Naive thymus-derived CD4-positive, alpha-beta T cell (primary cell): ENCODE measurements at regions of chr2 and their contacts with region 1.

Region 1: GRCh38 chr2:169109502-169110409 is 40.4 kb downstream of the DHRS9 start:
- DNase-seq: peak; percentile 45 to 77 (median 60)
- ATAC-seq: peak; percentile 62
- H3K4me3 ChIP-seq: no peak overlapping the region
- H3K4me3 Mint-ChIP-seq: no peak overlapping the region
- H3K27ac ChIP-seq: no peak overlapping the region
- H3K27ac Mint-ChIP-seq: peak overlapping the region in 1 of 9 donors; percentile 34
- H3K4me1 ChIP-seq: peaks cover 45 to 48% of the 10 kb centered on the region in 2 donors
- H3K4me1 Mint-ChIP-seq: peaks cover 36 to 56% (median 46%) of the 10 kb centered on the region in 7 donors
- H3K27me3 ChIP-seq: no peaks in the 10 kb centered on the region
- H3K27me3 Mint-ChIP-seq: peaks cover 0 to 6% (median 0%) of the 10 kb centered on the region in 5 donors

Region 2: GRCh38 chr2:169014780-169015179 is 95.0 kb before region 1 on chr2:
- CTCF ChIA-PET with region 1: no interaction called
- POLR2A ChIA-PET with region 1: no interaction called
- intact Hi-C with region 1: loop called in 1 of 2 experiments (anchors 5 kb)
- DNase-seq: no peak
- ATAC-seq: no peak
- H3K4me3 ChIP-seq: no peak overlapping the region
- H3K4me3 Mint-ChIP-seq: no peak overlapping the region
- H3K27ac ChIP-seq: no peak overlapping the region
- H3K27ac Mint-ChIP-seq: no peak overlapping the region
- H3K4me1 ChIP-seq: no peaks in the 10 kb centered on the region
- H3K4me1 Mint-ChIP-seq: peaks cover 0 to 4% (median 0%) of the 10 kb centered on the region in 7 donors
- H3K27me3 ChIP-seq: no peaks in the 10 kb centered on the region
- H3K27me3 Mint-ChIP-seq: peaks cover 0 to 10% (median 5%) of the 10 kb centered on the region in 5 donors

Region 3: GRCh38 chr2:169131587-169132512 is 22.1 kb after region 1 on chr2:
- CTCF ChIA-PET with region 1: interaction called, 52 read pairs
- POLR2A ChIA-PET with region 1: no interaction called
- intact Hi-C with region 1: loop called (anchors 1 kb)
- DNase-seq: peak in 7 of 9 donors; percentile 11 to 50 (median 40)
- ATAC-seq: peak; percentile 92
- H3K4me3 ChIP-seq: no peak overlapping the region
- H3K4me3 Mint-ChIP-seq: no peak overlapping the region
- H3K27ac ChIP-seq: no peak overlapping the region
- H3K27ac Mint-ChIP-seq: no peak overlapping the region
- H3K4me1 ChIP-seq: no peaks in the 10 kb centered on the region
- H3K4me1 Mint-ChIP-seq: peaks cover 0 to 7% (median 0%) of the 10 kb centered on the region in 7 donors
- H3K27me3 ChIP-seq: no peaks in the 10 kb centered on the region
- H3K27me3 Mint-ChIP-seq: no peaks in the 10 kb centered on the region

Region 4: DNA sequence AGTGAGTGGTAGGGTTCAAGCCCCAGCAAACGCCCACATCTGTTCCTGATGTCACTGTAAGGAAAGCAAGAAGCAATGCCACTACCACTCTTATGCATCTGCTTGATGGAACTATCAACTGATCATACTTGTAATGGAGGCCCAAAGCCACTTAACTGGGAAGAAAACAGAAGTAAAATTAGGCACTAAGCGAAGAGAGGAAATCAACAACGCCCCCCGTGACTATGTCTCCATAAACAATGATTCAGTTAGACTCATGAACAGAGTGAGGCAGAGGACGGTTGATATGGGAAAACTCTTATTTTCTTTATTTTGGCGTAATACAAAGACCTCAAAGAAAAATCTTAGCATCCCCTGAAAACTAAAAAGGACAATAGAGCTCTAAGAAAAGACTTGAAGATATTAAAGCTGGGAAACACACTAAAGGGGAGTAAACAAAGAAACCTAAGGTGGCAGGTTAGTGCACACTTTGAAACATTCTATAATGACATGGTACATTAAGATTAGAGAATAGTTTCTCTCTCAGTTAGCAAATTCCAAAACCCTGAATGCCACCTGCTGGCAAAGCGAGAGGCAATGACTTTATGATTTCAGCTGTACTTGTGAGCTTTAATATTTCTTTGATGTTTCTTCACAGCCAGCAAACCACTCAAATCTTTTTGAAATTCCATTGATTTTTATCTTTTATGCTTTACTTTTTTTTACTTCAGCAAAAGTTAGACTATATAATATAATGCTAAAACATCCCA is 166.1 kb after region 1 on chr2:
- CTCF ChIA-PET with region 1: no interaction called
- POLR2A ChIA-PET with region 1: no interaction called
- intact Hi-C with region 1: loop called in 1 of 2 experiments (anchors 1 kb)
- DNase-seq: no peak
- ATAC-seq: no peak
- H3K4me3 ChIP-seq: no peak overlapping the region
- H3K4me3 Mint-ChIP-seq: no peak overlapping the region
- H3K27ac ChIP-seq: no peak overlapping the region
- H3K27ac Mint-ChIP-seq: no peak overlapping the region
- H3K4me1 ChIP-seq: no peaks in the 10 kb centered on the region
- H3K4me1 Mint-ChIP-seq: no peaks in the 10 kb centered on the region
- H3K27me3 ChIP-seq: no peaks in the 10 kb centered on the region
- H3K27me3 Mint-ChIP-seq: peaks cover 0 to 21% (median 17%) of the 10 kb centered on the region in 5 donors

Region 5: GRCh38 chr2:169462896-169463695 is 353.3 kb after region 1 on chr2:
- CTCF ChIA-PET with region 1: no interaction called
- POLR2A ChIA-PET with region 1: no interaction called
- intact Hi-C with region 1: loop called in 1 of 2 experiments (anchors 5 kb)
- DNase-seq: peak in 2 of 9 donors; percentile 14 to 22
- ATAC-seq: no peak
- H3K4me3 ChIP-seq: no peak overlapping the region
- H3K4me3 Mint-ChIP-seq: no peak overlapping the region
- H3K27ac ChIP-seq: no peak overlapping the region
- H3K27ac Mint-ChIP-seq: peak overlapping the region in 1 of 9 donors; percentile 1
- H3K4me1 ChIP-seq: no peaks in the 10 kb centered on the region
- H3K4me1 Mint-ChIP-seq: peaks cover 0 to 3% (median 0%) of the 10 kb centered on the region in 7 donors
- H3K27me3 ChIP-seq: no peaks in the 10 kb centered on the region
- H3K27me3 Mint-ChIP-seq: peaks cover 0 to 3% (median 0%) of the 10 kb centered on the region in 5 donors